Caco-2 (cell line): ENCODE measurements at regions of chr17 and their contacts with region 1.

Region 1: DNA sequence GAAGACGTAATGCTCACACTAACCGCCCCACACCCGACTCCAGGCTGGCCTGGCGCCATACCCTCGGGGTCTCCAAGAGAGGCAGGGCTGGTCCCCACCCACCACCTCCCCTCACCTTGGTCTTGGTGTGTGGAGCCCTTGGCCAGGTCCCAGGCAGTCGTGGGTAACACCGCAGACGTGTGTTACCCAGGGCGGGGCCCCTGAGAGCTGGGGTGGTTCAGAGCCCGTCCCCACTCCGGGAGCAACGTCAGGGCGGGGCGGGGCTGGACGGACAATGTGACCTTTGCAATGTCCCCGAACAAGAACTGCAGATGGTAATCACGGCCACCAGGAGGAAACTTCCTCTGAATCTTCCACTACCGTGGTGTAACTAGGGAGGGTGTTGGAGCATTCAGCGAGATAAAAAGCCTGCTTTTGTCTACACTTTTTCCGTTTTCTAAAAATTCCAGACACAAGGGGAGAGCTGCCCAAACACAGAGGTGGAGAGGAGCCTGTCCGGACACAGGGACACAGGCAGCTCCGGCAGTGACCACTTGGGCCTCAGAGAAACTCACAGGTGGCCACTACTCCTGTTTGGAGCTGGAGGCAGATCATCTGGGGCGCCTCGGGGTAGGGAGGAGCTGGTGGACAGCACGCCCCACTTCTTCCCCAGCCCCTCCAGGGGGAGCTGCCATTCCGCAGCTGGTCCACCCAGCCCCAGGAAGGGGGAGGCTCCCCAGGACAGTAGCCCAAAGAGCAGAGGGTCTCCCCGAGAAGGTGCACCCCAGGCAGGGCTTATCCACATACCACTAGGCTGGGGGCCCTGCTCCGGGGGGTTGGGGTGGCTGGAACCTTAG is 14.2 kb upstream of the SLC38A10 start:
- DNase-seq: peak; percentile 95 to 96
- H3K4me3 ChIP-seq: peak overlapping the region; percentile 45
- H3K4me3 Mint-ChIP-seq: peak overlapping the region; percentile 76
- H3K27ac Mint-ChIP-seq: peak overlapping the region; percentile 98
- H3K4me1 ChIP-seq: peaks cover 37% of the 10 kb centered on the region
- H3K4me1 Mint-ChIP-seq: peaks cover 20% of the 10 kb centered on the region
- H3K27me3 ChIP-seq: no peaks in the 10 kb centered on the region
- H3K27me3 Mint-ChIP-seq: no peaks in the 10 kb centered on the region
- CTCF ChIP-seq: peak; percentile 78 to 83

Region 2: DNA sequence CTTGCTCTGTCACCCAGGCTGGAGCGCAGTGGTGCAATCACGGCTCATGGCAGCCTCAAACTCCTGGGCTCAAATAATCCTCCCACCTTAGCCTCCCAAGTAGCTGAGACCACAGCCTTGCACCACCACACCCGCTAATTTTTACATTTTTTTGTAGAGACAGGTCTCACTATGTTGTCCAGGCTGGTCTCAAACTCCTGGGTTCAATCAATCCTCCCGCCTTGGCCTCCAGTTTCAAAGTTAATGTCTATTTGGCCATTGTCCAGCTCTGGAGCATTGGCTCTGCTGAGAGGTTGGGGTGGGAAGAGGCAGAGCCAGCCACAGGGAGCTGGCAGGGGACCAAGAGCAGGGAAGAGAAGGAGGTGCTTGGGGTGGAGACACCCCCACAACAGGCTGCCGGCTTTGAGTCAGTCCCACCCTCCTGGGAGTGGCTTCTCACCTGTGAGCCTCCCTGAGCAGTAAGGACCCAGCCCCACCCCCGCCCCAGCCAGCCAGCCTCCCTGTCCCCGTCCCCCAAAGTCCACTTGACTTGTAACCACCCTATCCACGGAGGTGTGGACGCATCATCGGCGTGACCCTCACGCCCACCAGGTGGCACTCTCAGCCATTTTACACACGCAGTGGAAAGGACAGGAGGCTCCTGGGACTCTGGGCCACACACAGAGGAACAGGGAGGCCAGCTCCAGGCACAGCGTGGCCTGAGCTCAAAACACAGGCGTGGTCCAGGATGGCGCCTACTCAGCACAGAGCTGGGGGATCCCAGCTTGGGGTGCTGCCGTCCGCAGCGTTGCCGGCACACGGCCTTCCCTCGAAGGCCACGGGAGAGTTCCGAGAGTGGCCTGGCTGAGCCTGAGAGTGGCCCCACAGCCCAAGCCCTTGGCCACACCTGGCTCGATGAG is 166.7 kb before region 1 on chr17:
- CTCF ChIA-PET with region 1: no interaction called
- POLR2A ChIA-PET with region 1: no interaction called
- intact Hi-C with region 1: no loop called
- DNase-seq: peak; percentile 88 to 90
- H3K4me3 ChIP-seq: no peak overlapping the region
- H3K4me3 Mint-ChIP-seq: no peak overlapping the region
- H3K27ac Mint-ChIP-seq: no peak overlapping the region
- H3K4me1 ChIP-seq: peaks cover 6% of the 10 kb centered on the region
- H3K4me1 Mint-ChIP-seq: no peaks in the 10 kb centered on the region
- H3K27me3 ChIP-seq: no peaks in the 10 kb centered on the region
- H3K27me3 Mint-ChIP-seq: no peaks in the 10 kb centered on the region
- CTCF ChIP-seq: peak; percentile 62 to 81

Region 3: GRCh38 chr17:81228834-81229663 is 80.2 kb before region 1 on chr17:
- CTCF ChIA-PET with region 1: no interaction called
- POLR2A ChIA-PET with region 1: no interaction called
- intact Hi-C with region 1: no loop called
- DNase-seq: no peak
- H3K4me3 ChIP-seq: no peak overlapping the region
- H3K4me3 Mint-ChIP-seq: no peak overlapping the region
- H3K27ac Mint-ChIP-seq: no peak overlapping the region
- H3K4me1 ChIP-seq: peaks cover 6% of the 10 kb centered on the region
- H3K4me1 Mint-ChIP-seq: no peaks in the 10 kb centered on the region
- H3K27me3 ChIP-seq: no peaks in the 10 kb centered on the region
- H3K27me3 Mint-ChIP-seq: no peaks in the 10 kb centered on the region
- CTCF ChIP-seq: no peak

Region 4: DNA sequence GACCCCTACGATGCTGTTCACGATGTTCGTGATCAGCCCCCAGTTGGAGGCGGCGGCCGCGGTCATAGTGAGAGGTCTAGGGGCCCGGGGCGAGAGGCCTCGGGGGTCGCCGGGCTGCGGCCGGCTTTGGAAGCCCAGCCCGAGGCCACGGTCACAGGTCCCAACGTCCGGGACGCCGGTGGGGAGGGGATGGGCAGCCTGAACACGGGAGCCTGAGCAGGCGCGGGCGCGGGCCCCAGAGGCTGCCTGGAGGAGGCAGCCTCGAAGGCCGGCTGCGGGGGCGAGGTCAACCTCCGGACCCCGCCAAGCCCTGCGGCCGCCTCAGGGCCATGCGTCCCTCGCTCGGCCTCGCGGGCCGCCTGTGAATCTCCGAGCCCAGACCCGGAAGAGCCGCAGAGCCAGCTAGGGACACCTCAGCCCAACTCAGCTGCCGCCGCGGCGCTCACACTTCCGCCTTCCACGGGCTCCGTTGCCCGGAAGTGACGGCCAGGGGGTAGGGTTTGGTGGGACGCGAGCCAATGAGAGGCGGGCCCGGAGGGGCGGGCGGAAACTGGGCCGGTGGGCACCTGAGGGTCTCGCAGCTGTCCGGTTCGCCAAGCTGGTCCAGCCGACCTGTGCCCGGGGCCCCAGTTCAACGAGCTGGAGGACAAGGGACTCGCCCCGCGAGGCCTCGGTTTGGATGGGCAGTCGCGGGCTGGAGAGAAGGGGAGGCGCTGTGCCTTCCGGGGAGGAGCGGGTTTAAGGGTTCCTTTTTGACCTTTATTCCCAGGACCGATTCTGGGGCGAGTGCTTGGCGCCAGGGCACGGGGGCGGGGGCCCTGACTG is 14.2 kb before region 1 on chr17 and contains the start of gene SLC38A10:
- CTCF ChIA-PET with region 1: interaction called, 10 read pairs
- POLR2A ChIA-PET with region 1: interaction called, 6 read pairs
- intact Hi-C with region 1: loop called (anchors 1 kb)
- DNase-seq: peak; percentile 92 to 94
- H3K4me3 ChIP-seq: peak within 1 kb of the TSS; percentile 96
- H3K4me3 Mint-ChIP-seq: peak within 1 kb of the TSS; percentile 80
- H3K27ac Mint-ChIP-seq: peak within 1 kb of the TSS; percentile 83
- H3K4me1 ChIP-seq: peaks cover 17% of the 10 kb centered on the region
- H3K4me1 Mint-ChIP-seq: peaks cover 12% of the 10 kb centered on the region
- H3K27me3 ChIP-seq: no peaks in the 10 kb centered on the region
- H3K27me3 Mint-ChIP-seq: no peaks in the 10 kb centered on the region
- CTCF ChIP-seq: no peak
- total RNA-seq, gene SLC38A10: 131 and 137 TPM in 2 replicates

Region 5: DNA sequence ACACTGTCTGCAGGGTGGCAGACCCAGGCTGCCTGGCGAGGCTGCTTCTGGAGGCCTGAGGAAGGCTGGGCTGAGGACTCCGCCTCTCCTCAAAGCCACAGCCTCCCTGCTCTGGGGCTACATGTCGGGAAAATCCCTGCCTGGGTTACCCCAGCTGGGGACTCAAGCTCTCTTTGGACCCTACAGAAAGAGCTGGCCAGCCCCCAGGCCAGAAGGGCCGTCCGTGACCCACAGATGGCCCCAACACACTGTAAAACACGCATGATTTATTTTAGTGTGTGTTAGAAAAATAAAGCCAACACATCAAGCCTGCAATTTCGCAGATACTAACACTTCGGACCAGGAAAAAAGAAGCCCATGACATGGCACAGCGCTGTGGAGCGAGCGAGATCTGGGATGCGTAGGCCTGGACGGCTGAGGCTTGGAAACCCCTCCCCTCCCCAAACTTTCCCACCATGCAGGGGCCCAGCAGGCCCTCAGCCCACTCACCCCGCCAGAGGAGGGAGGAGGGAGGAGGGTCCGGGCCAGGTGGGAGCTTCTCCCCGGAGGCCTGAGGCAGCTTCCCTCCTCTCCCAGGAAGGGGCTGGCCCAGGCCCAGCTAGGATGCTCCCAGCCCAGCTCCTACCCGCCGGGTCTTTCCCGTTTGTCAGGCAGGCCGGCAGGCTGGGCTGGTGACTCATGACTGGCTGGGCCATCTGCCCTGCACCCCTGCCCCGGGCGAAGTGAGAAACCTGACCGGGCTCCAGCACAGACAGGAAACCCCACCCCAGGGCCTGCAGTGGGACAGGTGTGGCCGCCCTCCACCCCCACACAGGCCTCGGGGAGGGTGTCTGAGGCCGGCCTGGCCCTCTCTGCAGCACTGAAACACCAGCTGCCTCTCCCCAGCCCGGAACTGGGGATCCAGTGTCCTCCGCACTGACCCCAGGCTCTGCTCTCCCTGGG is 20.0 kb after region 1 on chr17:
- CTCF ChIA-PET with region 1: interaction called, 49 read pairs
- POLR2A ChIA-PET with region 1: interaction called, 22 read pairs
- intact Hi-C with region 1: loop called (anchors 1 kb)
- DNase-seq: peak; percentile 98
- H3K4me3 ChIP-seq: peak overlapping the region; percentile 29
- H3K4me3 Mint-ChIP-seq: peak overlapping the region; percentile 74
- H3K27ac Mint-ChIP-seq: peak overlapping the region; percentile 95
- H3K4me1 ChIP-seq: peaks cover 54% of the 10 kb centered on the region
- H3K4me1 Mint-ChIP-seq: peaks cover 27% of the 10 kb centered on the region
- H3K27me3 ChIP-seq: no peaks in the 10 kb centered on the region
- H3K27me3 Mint-ChIP-seq: no peaks in the 10 kb centered on the region
- CTCF ChIP-seq: no peak

Region 6: DNA sequence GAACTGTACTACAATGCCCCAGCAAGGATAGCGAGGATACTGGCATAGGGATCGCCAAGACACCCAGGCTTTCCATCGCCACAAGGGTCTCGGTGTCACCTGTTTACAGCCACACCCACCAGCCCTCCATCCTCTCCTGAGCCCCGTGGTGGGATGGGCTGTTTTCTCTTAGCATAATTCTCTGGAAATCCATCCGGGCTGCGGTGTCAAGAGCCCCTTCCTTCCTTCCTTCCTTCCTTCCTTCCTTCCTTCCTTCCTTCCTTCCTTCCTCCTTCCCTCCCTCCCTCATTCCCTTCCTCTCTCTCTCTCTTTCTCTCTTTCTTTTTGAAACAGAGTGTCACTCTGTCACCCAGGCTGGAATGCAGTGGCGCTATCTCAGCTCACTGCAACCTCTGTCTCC is 49.9 kb after region 1 on chr17:
- CTCF ChIA-PET with region 1: interaction called, 16 read pairs
- POLR2A ChIA-PET with region 1: no interaction called
- intact Hi-C with region 1: no loop called
- DNase-seq: no peak
- H3K4me3 ChIP-seq: no peak overlapping the region
- H3K4me3 Mint-ChIP-seq: no peak overlapping the region
- H3K27ac Mint-ChIP-seq: no peak overlapping the region
- H3K4me1 ChIP-seq: peaks cover 48% of the 10 kb centered on the region
- H3K4me1 Mint-ChIP-seq: peaks cover 32% of the 10 kb centered on the region
- H3K27me3 ChIP-seq: no peaks in the 10 kb centered on the region
- H3K27me3 Mint-ChIP-seq: no peaks in the 10 kb centered on the region
- CTCF ChIP-seq: no peak

Region 7: DNA sequence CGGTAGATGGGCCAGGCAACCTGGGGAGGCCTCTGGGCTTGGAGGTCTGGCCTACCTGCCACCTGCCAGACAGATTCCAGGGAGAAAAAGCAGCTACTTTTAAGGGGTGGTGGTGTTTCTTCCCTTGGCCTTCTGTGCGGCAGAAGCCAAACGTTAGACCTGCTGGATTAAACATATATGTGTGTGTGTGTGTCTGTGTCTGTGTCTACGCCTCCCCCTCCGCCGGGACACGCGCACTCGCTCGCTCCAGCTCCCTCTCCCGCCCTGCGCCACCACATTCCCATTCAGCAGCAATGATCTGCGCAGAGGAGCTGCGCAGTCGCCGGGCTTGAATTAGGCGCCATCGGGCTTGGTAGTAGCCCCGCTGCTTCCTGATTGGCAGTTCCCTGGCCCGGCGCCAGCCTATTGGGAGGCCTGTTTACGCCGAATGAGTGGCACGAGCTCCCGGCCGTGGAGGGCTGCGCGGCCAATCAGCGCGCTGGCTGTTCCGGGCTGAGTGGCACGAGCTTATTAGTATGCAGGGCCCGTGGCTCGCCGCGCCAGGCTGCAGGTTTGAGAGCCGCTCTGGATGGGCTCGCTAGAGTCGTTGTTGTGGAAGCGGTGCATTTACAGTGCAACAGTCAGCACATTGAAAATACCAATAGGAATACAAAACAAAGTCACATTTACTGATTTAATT is 85.8 kb after region 1 on chr17 and contains the start of gene BAHCC1:
- CTCF ChIA-PET with region 1: interaction called, 82 read pairs
- POLR2A ChIA-PET with region 1: interaction called, 21 read pairs
- intact Hi-C with region 1: loop called (anchors 1 kb)
- DNase-seq: peak; percentile 100
- H3K4me3 ChIP-seq: peak within 1 kb of the TSS; percentile 94
- H3K4me3 Mint-ChIP-seq: peak within 1 kb of the TSS; percentile 84
- H3K27ac Mint-ChIP-seq: peak within 1 kb of the TSS; percentile 98
- H3K4me1 ChIP-seq: peaks cover 12% of the 10 kb centered on the region
- H3K4me1 Mint-ChIP-seq: peaks cover 28% of the 10 kb centered on the region
- H3K27me3 ChIP-seq: no peaks in the 10 kb centered on the region
- H3K27me3 Mint-ChIP-seq: no peaks in the 10 kb centered on the region
- CTCF ChIP-seq: no peak
- total RNA-seq, gene BAHCC1: 10.2 and 15.5 TPM in 2 replicates